Astrocyte of the cerebellum (primary cell): ENCODE measurements at regions of chr3 and their contacts with region 1.

Region 1: GRCh38 chr3:13518516-13518953 is 30.4 kb upstream of the FBLN2 start:
- DNase-seq: peak; percentile 68
- H3K4me3 ChIP-seq: no peak overlapping the region
- CTCF ChIP-seq: no peak

Region 2: DNA sequence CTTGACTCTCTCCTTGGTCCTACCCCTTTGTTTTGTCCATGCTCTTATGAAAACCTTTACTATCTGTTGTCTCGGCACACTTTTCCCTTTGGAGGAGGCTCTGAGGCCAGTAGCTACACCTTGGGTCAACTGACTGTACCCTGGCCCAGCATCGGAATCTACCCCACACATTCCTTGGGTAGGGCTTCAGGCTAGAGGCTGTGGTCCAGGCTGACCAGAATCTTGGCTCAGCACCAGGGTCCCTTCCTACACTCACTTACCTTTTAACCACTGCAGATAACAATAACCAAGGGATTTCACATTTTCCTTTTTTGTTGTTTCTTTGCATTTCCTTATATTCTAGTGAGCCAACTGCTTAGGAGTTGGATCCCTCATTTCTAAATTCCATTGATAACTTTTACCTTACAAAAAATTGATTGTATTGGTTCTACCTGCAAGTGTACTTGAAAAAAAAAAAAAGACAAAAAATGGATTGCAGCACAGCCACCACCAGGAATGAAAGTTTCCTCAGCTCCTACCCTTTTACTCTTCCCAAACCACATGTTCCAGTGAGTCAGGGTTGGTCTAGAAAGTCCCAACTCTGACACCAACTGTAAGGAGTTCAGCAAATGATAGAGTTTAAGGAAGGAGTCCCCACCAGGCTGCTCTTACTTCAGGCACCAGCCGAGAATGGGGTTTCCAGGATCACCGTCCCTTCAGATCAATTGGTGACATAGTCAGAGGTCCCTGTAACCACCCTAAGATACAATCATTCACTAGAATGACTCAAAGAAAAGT is 126.0 kb after region 1 on chr3:
- in situ Hi-C with region 1: loop called (anchors 5 kb)
- DNase-seq: no peak
- H3K4me3 ChIP-seq: no peak overlapping the region
- CTCF ChIP-seq: no peak